GM12878 (cell line): ENCODE measurements at regions of chr2 and their contacts with region 1.

Region 1: DNA sequence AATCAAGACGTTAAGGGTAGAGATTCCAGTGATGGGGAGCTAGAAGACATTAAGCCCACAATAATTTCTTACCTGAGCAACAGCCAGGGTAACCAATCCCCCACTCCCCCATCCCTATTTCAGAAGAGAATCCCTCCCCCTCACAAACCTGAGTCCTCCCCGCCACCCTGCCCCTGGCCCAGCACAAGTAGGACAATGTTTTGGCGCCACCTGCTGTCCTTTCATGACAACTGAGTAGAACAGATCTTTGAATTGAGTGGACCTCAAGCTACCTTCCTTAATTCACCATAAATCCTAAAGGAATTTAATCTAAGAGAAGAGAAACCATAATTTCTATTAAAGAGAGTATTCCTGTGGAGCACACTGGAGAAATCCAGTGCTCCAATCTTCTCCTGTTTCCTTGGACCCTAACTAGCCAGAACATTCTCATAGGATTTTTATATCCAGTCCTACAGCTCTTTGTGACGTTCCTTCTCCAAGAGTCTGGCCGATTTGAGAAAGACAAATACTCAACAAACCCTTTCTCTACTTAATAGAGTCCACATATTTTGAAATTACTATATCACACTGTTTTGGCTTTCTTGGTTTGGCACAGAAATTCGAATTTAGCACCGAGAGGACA is 41.1 kb downstream of the NHEJ1 start:
- DNase-seq: peak; percentile 5
- ATAC-seq: peak; percentile 89
- H3K4me3 ChIP-seq: no peak overlapping the region
- H3K27ac ChIP-seq: no peak overlapping the region
- H3K4me1 ChIP-seq: no peaks in the 10 kb centered on the region
- H3K27me3 ChIP-seq: no peaks in the 10 kb centered on the region
- CTCF ChIP-seq: peak; percentile 68 to 74 (median 71)
- EP300 ChIP-seq: no peak
- POLR2A ChIP-seq: no peak
- RAD21 ChIP-seq: peak; percentile 90

Region 2: DNA sequence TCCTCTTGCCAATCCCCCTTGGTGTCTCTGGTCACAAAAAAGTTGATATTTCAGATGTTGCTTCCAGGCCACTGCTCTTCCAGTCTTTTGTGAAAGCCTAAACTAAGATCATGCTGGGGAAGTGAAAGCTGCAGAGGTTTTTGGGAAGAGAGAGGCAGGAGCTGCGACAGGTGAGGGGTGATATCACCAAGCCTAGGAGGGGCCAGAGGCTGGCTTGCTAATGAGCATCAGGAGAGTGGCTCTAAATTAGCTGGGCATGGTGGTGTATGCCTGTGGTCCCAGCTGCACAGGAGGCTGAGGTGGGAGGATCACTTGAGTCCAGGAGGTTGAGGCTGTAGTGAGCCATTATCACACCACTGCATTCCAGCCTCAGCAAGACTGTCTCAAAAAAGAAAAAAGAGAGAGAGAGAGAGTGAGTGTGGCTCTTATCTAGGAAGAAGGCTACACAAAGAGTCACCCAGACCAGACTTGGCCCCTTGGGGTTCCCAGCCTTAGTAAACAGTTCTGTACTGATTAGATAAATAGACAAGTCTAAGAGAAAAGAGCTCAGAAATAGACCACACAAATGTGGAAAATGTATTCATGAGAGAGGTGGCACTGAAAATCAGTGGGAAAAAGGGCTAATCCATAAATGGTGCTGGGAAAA is 174.7 kb before region 1 on chr2:
- CTCF ChIA-PET with region 1: no interaction called
- POLR2A ChIA-PET with region 1: no interaction called
- RAD21 ChIA-PET with region 1: no interaction called
- SMC1A ChIA-PET with region 1: no interaction called
- in situ Hi-C with region 1: no loop called
- intact Hi-C with region 1: no loop called
- DNase-seq: no peak
- ATAC-seq: no peak
- H3K4me3 ChIP-seq: no peak overlapping the region
- H3K27ac ChIP-seq: no peak overlapping the region
- H3K4me1 ChIP-seq: no peaks in the 10 kb centered on the region
- H3K27me3 ChIP-seq: peaks cover 0 to 2% of the 10 kb centered on the region in 2 experiments; a peak in 2 of 4 replicates
- CTCF ChIP-seq: no peak
- EP300 ChIP-seq: no peak
- POLR2A ChIP-seq: no peak
- RAD21 ChIP-seq: no peak

Region 3: GRCh38 chr2:218979846-218980734 is 139.4 kb before region 1 on chr2:
- CTCF ChIA-PET with region 1: interaction called, 16 read pairs
- POLR2A ChIA-PET with region 1: no interaction called
- RAD21 ChIA-PET with region 1: no interaction called
- SMC1A ChIA-PET with region 1: interaction called, 3 read pairs
- in situ Hi-C with region 1: no loop called
- intact Hi-C with region 1: no loop called
- DNase-seq: peak; percentile 24
- ATAC-seq: peak; percentile 99
- H3K4me3 ChIP-seq: 0 out of 2 replicates have a peak overlapping the region, but pooled peaks have one; percentile 44
- H3K27ac ChIP-seq: no peak overlapping the region
- H3K4me1 ChIP-seq: no peaks in the 10 kb centered on the region; the same call in 1 of the 2 replicates
- H3K27me3 ChIP-seq: peaks cover 24 to 30% of the 10 kb centered on the region in 2 experiments
- CTCF ChIP-seq: peak; percentile 87 to 93 (median 88)
- EP300 ChIP-seq: no peak
- POLR2A ChIP-seq: no peak
- RAD21 ChIP-seq: peak; percentile 69

Region 4: GRCh38 chr2:219073413-219074129 is 46.0 kb before region 1 on chr2:
- CTCF ChIA-PET with region 1: interaction called, 281 read pairs
- POLR2A ChIA-PET with region 1: no interaction called
- RAD21 ChIA-PET with region 1: interaction called, 55 read pairs
- SMC1A ChIA-PET with region 1: interaction called, 115 read pairs
- in situ Hi-C with region 1: no loop called
- intact Hi-C with region 1: loop called (anchors 1 kb)
- DNase-seq: no peak
- ATAC-seq: peak; percentile 74
- H3K4me3 ChIP-seq: no peak overlapping the region
- H3K27ac ChIP-seq: no peak overlapping the region
- H3K4me1 ChIP-seq: no peaks in the 10 kb centered on the region
- H3K27me3 ChIP-seq: no peaks in the 10 kb centered on the region
- CTCF ChIP-seq: peak; percentile 48 to 62 (median 58)
- EP300 ChIP-seq: no peak
- POLR2A ChIP-seq: no peak
- RAD21 ChIP-seq: peak; percentile 59

Region 5: GRCh38 chr2:219087361-219087760 is 32.2 kb before region 1 on chr2:
- CTCF ChIA-PET with region 1: interaction called, 46 read pairs
- POLR2A ChIA-PET with region 1: no interaction called
- RAD21 ChIA-PET with region 1: interaction called, 5 read pairs
- SMC1A ChIA-PET with region 1: interaction called, 5 read pairs
- in situ Hi-C with region 1: no loop called
- intact Hi-C with region 1: no loop called
- DNase-seq: no peak
- ATAC-seq: no peak
- H3K4me3 ChIP-seq: no peak overlapping the region
- H3K27ac ChIP-seq: no peak overlapping the region; the same call in 1 of the 2 replicates
- H3K4me1 ChIP-seq: peaks cover 14% of the 10 kb centered on the region
- H3K27me3 ChIP-seq: no peaks in the 10 kb centered on the region
- CTCF ChIP-seq: no peak
- EP300 ChIP-seq: no peak
- POLR2A ChIP-seq: no peak
- RAD21 ChIP-seq: no peak

Region 6: DNA sequence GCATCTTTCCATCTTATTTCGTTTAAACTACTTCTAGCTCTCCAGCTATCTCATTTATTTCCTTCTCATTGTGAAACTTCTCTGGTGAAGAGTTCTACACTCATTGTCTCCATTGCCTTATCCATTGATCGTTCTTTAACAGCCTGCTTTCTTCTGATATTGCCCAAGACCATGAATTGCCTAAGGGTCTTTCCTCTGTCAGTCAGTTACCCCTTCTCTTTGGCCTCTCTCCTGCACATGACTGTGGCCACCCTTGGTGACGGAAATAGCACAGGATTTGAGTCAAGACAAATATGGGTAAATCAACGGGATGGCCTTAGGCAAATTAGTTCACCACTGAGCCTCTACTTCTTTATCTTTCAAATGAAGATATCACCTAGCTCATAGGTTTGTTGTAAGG is 14.4 kb after region 1 on chr2:
- CTCF ChIA-PET with region 1: interaction called, 29 read pairs
- POLR2A ChIA-PET with region 1: no interaction called
- RAD21 ChIA-PET with region 1: interaction called, 10 read pairs
- SMC1A ChIA-PET with region 1: interaction called, 6 read pairs
- in situ Hi-C with region 1: no loop called
- intact Hi-C with region 1: no loop called
- DNase-seq: no peak
- ATAC-seq: no peak
- H3K4me3 ChIP-seq: no peak overlapping the region
- H3K27ac ChIP-seq: no peak overlapping the region
- H3K4me1 ChIP-seq: no peaks in the 10 kb centered on the region
- H3K27me3 ChIP-seq: no peaks in the 10 kb centered on the region
- CTCF ChIP-seq: no peak
- EP300 ChIP-seq: no peak
- POLR2A ChIP-seq: no peak
- RAD21 ChIP-seq: no peak